ENCODE measurements at regions of chr4 and their contacts with region 1.

Region 1: GRCh38 chr4:180828440-180829018 is 1414.7 kb upstream of the TENM3 start:
- DNase-seq: peak; percentile 36 to 64 (median 59)
- H3K4me3 ChIP-seq: no peak overlapping the region
- H3K27ac ChIP-seq: no peak overlapping the region
- H3K4me1 ChIP-seq: peaks cover 0 to 6% (median 2%) of the 10 kb centered on the region in 4 experiments
- H3K27me3 ChIP-seq: no peaks in the 10 kb centered on the region

Region 2: GRCh38 chr4:180770265-180770664 is 58.3 kb before region 1 on chr4:
- CTCF ChIA-PET with region 1: no interaction called
- POLR2A ChIA-PET with region 1: no interaction called
- DNase-seq: no peak
- H3K4me3 ChIP-seq: no peak overlapping the region
- H3K27ac ChIP-seq: no peak overlapping the region
- H3K4me1 ChIP-seq: no peaks in the 10 kb centered on the region
- H3K27me3 ChIP-seq: no peaks in the 10 kb centered on the region

Region 3: DNA sequence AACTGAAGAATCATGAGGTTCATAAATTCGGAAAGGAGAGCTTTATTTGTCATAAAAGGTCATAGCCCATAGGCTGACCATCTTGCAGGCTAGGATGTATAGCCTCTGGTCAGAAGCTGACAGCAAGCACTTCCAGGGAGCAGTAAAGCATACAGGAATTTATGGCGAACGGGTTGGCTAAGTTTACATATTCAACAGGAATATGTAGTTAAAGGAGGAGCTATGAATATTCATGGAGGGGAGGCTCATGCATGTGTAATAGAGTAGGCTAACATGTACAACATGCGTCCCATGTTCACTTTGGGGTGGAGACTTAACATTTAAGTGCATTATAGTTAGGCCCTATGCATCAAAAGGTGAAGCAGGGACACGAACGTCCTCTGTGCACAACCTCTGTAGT is 11.0 kb before region 1 on chr4:
- CTCF ChIA-PET with region 1: interaction called, 11 read pairs
- POLR2A ChIA-PET with region 1: no interaction called
- DNase-seq: no peak
- H3K4me3 ChIP-seq: no peak overlapping the region
- H3K27ac ChIP-seq: no peak overlapping the region
- H3K4me1 ChIP-seq: no peaks in the 10 kb centered on the region
- H3K27me3 ChIP-seq: peaks cover 0 to 2% (median 0%) of the 10 kb centered on the region in 5 experiments

Measured in common myeloid progenitor, CD34-positive (primary cell).